ENCODE measurements at regions of chr5 and their contacts with region 1.

Region 1: GRCh38 chr5:124806373-124807077 is 60.1 kb upstream of the ZNF608 start:
- DNase-seq: peak; percentile 96
- H3K4me3 Mint-ChIP-seq: no peak overlapping the region
- H3K27ac Mint-ChIP-seq: no peak overlapping the region
- H3K4me1 Mint-ChIP-seq: peaks cover 5% of the 10 kb centered on the region
- H3K27me3 Mint-ChIP-seq: no peaks in the 10 kb centered on the region
- CTCF ChIP-seq: no peak

Region 2: DNA sequence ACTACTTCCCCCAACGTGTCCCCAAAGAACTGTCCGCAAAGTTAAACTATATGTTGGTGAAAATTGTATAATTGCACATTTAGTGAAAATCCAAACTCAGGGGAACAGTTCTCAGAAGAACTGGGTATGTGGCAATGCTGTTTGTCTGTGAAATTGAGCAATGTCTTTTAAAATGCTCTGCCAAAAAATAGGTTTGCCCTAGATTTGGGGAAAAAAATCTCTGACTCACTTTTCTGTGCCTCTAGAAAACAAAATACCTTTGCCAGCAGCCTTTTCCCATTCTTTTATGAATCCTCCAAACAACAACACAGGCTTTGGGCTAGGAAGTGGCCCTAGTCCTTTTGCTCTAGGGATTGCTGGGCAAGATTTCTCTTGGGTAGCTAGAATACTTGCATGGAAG is 22.7 kb before region 1 on chr5:
- CTCF ChIA-PET with region 1: no interaction called
- POLR2A ChIA-PET with region 1: interaction called, 37 read pairs
- intact Hi-C with region 1: no loop called
- DNase-seq: peak; percentile 96
- H3K4me3 Mint-ChIP-seq: no peak overlapping the region
- H3K27ac Mint-ChIP-seq: peak overlapping the region; percentile 36
- H3K4me1 Mint-ChIP-seq: peaks cover 5% of the 10 kb centered on the region
- H3K27me3 Mint-ChIP-seq: no peaks in the 10 kb centered on the region
- CTCF ChIP-seq: no peak

Region 3: DNA sequence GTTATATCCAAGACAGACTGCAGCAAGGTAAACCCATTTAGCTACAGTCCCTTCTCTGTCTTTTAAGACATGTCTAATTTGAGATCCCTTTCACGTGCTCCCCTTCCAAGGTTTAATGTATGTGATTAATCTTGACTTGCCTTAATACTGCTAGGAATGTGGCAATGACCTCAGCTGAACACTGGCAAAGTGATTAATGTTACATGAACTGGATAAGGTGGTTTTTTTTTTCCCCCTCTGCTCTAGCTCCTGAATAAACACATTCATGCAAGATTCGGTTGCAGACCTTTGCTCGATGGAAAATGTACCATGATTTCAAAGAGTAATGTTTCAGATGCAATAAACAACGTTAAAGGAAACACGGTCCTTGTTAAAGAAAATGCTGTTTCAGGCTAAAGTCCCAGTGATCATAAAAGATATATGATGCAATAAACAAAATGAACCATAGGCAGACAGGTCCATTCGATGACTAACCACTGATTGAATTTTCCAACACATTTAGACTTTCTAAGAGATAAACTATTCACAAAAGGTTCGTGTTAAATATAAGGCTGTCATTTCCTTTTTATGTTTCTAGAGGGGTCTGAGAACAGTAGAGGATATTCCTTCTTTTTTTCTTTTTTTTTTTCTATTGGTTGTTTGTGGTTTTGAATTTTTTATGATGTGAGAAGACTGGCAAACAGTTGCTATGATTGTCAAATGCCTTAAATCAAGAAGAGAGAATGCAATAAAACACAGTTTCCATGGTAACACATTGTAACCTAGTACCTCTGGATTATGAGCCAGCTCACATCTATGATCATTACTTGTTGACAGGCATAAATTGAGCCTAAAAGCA is 15.4 kb before region 1 on chr5:
- CTCF ChIA-PET with region 1: interaction called, 5 read pairs
- POLR2A ChIA-PET with region 1: interaction called, 37 read pairs
- intact Hi-C with region 1: no loop called
- DNase-seq: peak; percentile 73
- H3K4me3 Mint-ChIP-seq: no peak overlapping the region
- H3K27ac Mint-ChIP-seq: peak overlapping the region; percentile 54
- H3K4me1 Mint-ChIP-seq: peaks cover 21% of the 10 kb centered on the region
- H3K27me3 Mint-ChIP-seq: no peaks in the 10 kb centered on the region
- CTCF ChIP-seq: no peak

Region 4: GRCh38 chr5:124819201-124819600 is 12.7 kb after region 1 on chr5:
- CTCF ChIA-PET with region 1: interaction called, 6 read pairs
- POLR2A ChIA-PET with region 1: interaction called, 51 read pairs
- intact Hi-C with region 1: no loop called
- DNase-seq: no peak
- H3K4me3 Mint-ChIP-seq: no peak overlapping the region
- H3K27ac Mint-ChIP-seq: peak overlapping the region; percentile 75
- H3K4me1 Mint-ChIP-seq: peaks cover 23% of the 10 kb centered on the region
- H3K27me3 Mint-ChIP-seq: no peaks in the 10 kb centered on the region
- CTCF ChIP-seq: no peak

Region 5: GRCh38 chr5:124824637-124825158 is 18.2 kb after region 1 on chr5:
- CTCF ChIA-PET with region 1: interaction called, 3 read pairs
- POLR2A ChIA-PET with region 1: interaction called, 51 read pairs
- intact Hi-C with region 1: no loop called
- DNase-seq: peak; percentile 96
- H3K4me3 Mint-ChIP-seq: peak overlapping the region; percentile 55
- H3K27ac Mint-ChIP-seq: peak overlapping the region; percentile 89
- H3K4me1 Mint-ChIP-seq: peaks cover 33% of the 10 kb centered on the region
- H3K27me3 Mint-ChIP-seq: no peaks in the 10 kb centered on the region
- CTCF ChIP-seq: no peak

Region 6: DNA sequence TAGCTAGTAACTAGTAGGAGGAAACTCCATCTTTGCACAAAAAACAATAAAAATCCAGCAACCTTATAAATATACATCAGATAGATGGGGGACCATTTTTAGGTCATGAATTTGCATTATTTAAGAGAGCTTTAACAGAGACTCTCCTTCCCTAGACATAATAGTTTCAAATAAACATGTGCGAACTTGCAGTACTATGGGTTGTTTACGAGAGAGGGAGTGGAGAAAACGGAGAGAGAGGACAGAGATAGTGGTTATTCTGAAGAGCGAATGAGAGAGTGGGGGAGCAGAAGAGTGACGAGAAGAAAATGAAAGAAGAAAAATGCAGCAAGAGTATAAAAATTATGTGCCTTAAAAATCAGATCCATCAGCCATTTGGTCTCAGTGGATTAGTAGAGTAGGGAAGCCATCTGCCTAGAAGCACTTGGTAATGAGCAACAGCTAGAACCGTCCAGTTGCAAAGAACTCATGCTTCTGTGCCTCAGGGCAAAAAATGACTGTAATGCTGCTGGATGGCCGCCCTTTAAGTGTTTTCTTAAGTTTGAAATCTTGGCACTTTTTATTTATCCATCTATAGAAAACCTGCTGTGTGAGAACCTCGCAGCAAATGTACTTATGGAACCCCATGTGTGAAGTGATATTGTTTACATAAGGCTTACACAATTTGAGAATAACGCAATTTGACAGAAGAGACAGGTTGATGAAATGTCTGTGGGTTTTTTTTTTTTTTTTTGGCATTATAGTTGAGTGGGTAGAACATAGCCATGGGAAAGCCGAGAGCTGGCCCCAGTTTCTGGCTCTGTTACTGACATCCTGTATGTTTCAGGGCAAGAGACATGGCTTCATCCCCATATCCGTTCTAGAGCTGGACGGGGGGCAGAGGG is 35.5 kb after region 1 on chr5:
- CTCF ChIA-PET with region 1: interaction called, 5 read pairs
- POLR2A ChIA-PET with region 1: interaction called, 25 read pairs
- intact Hi-C with region 1: no loop called
- DNase-seq: peak; percentile 100
- H3K4me3 Mint-ChIP-seq: peak overlapping the region; percentile 38
- H3K27ac Mint-ChIP-seq: peak overlapping the region; percentile 3
- H3K4me1 Mint-ChIP-seq: peaks cover 21% of the 10 kb centered on the region
- H3K27me3 Mint-ChIP-seq: no peaks in the 10 kb centered on the region
- CTCF ChIP-seq: no peak

Region 7: GRCh38 chr5:125134216-125135081 is 327.9 kb after region 1 on chr5:
- CTCF ChIA-PET with region 1: no interaction called
- POLR2A ChIA-PET with region 1: no interaction called
- intact Hi-C with region 1: no loop called
- DNase-seq: peak; percentile 42
- H3K4me3 Mint-ChIP-seq: no peak overlapping the region
- H3K27ac Mint-ChIP-seq: no peak overlapping the region
- H3K4me1 Mint-ChIP-seq: peaks cover 3% of the 10 kb centered on the region
- H3K27me3 Mint-ChIP-seq: no peaks in the 10 kb centered on the region
- CTCF ChIP-seq: no peak

Region 8: GRCh38 chr5:125950012-125950411 is 1143.5 kb after region 1 on chr5:
- CTCF ChIA-PET with region 1: no interaction called
- POLR2A ChIA-PET with region 1: no interaction called
- intact Hi-C with region 1: no loop called
- DNase-seq: no peak
- H3K4me3 Mint-ChIP-seq: no peak overlapping the region
- H3K27ac Mint-ChIP-seq: no peak overlapping the region
- H3K4me1 Mint-ChIP-seq: no peaks in the 10 kb centered on the region
- H3K27me3 Mint-ChIP-seq: no peaks in the 10 kb centered on the region
- CTCF ChIP-seq: no peak

Measured in MCF 10A (cell line).